ENCODE measurements at regions of chr10 and their contacts with region 1.

Region 1: GRCh38 chr10:5548527-5549223 is 23.9 kb downstream of the CALML3 start:
- DNase-seq: peak; percentile 91
- H3K4me3 Mint-ChIP-seq: no peak overlapping the region
- H3K27ac Mint-ChIP-seq: no peak overlapping the region
- H3K4me1 Mint-ChIP-seq: peaks cover 38% of the 10 kb centered on the region
- H3K27me3 Mint-ChIP-seq: no peaks in the 10 kb centered on the region
- CTCF ChIP-seq: no peak

Region 2: GRCh38 chr10:5466418-5467154 is 82.1 kb before region 1 on chr10:
- CTCF ChIA-PET with region 1: interaction called, 4 read pairs
- POLR2A ChIA-PET with region 1: interaction called, 31 read pairs
- intact Hi-C with region 1: no loop called
- DNase-seq: peak; percentile 91
- H3K4me3 Mint-ChIP-seq: peak overlapping the region; percentile 43
- H3K27ac Mint-ChIP-seq: peak overlapping the region; percentile 78
- H3K4me1 Mint-ChIP-seq: peaks cover 23% of the 10 kb centered on the region
- H3K27me3 Mint-ChIP-seq: no peaks in the 10 kb centered on the region
- CTCF ChIP-seq: no peak

Region 3: DNA sequence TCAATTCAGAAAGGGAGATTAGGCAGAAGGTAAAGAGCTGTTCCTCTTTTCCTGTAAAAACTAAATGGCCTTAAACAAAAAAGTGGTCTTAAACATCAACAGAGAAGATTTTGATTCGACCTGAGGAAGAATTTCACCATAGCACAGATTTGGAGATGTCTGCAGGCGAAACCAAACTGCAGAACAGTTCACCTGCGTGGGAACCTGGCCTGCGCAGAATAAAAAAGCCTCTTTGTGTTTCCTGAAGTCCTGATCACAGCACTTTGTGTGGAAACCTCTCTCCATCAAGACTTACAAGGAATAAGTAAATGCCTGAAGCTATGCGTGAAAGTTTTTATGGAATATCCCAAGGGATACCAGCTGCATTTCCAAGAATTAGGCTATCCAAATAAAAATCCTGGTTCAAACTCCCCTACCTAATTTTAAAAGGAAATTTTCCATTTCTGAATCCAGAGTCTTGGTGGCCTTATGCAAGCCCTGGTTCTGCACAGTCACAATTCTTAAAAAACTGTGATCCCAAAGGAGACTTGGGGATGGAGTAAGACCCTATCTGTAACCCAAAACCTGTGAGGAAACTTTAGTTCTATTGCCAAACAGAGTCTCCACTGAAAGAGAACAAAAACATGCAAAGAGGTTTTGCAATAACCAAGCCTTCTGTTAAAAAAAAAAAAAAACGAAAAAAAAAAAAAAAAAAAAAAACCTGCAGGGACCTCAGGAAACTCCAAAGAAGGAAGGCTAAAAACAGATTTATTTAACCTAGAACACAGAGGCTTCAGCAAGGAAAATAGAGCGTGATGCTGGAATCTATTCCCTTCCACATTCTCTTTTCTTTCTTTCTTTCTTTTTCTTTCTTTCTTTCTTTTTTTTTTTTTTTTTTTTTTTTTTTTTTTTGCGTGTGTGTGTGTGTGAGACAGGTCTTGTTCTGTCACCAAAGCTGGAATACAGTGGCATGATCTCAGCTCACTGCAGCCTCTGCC is 13.5 kb before region 1 on chr10:
- CTCF ChIA-PET with region 1: interaction called, 3 read pairs
- POLR2A ChIA-PET with region 1: interaction called, 69 read pairs
- intact Hi-C with region 1: no loop called
- DNase-seq: peak; percentile 88
- H3K4me3 Mint-ChIP-seq: peak overlapping the region; percentile 33
- H3K27ac Mint-ChIP-seq: no peak overlapping the region
- H3K4me1 Mint-ChIP-seq: peaks cover 29% of the 10 kb centered on the region
- H3K27me3 Mint-ChIP-seq: no peaks in the 10 kb centered on the region
- CTCF ChIP-seq: no peak

Region 4: GRCh38 chr10:5563991-5564536 is 15.4 kb after region 1 on chr10:
- CTCF ChIA-PET with region 1: interaction called, 3 read pairs
- POLR2A ChIA-PET with region 1: interaction called, 50 read pairs
- intact Hi-C with region 1: loop called (anchors 2 kb)
- DNase-seq: peak; percentile 47
- H3K4me3 Mint-ChIP-seq: no peak overlapping the region
- H3K27ac Mint-ChIP-seq: peak overlapping the region; percentile 54
- H3K4me1 Mint-ChIP-seq: peaks cover 40% of the 10 kb centered on the region
- H3K27me3 Mint-ChIP-seq: no peaks in the 10 kb centered on the region
- CTCF ChIP-seq: no peak

Region 5: GRCh38 chr10:5614155-5614721 is 65.6 kb after region 1 on chr10:
- CTCF ChIA-PET with region 1: interaction called, 3 read pairs
- POLR2A ChIA-PET with region 1: interaction called, 59 read pairs
- intact Hi-C with region 1: loop called (anchors 2 kb)
- DNase-seq: peak; percentile 86
- H3K4me3 Mint-ChIP-seq: peak overlapping the region; percentile 19
- H3K27ac Mint-ChIP-seq: peak overlapping the region; percentile 93
- H3K4me1 Mint-ChIP-seq: peaks cover 72% of the 10 kb centered on the region
- H3K27me3 Mint-ChIP-seq: no peaks in the 10 kb centered on the region
- CTCF ChIP-seq: no peak